AG04450 (cell line): ENCODE measurements at regions of chr3 and their contacts with region 1.

Region 1: GRCh38 chr3:63818281-63819150 is 583 bp upstream of the C3orf49 start:
- DNase-seq: peak; percentile 38
- H3K4me3 ChIP-seq: no peak overlapping the region
- H3K27ac ChIP-seq: no peak overlapping the region
- H3K27me3 ChIP-seq: no peaks in the 10 kb centered on the region
- CTCF ChIP-seq: peak; percentile 82

Region 2: DNA sequence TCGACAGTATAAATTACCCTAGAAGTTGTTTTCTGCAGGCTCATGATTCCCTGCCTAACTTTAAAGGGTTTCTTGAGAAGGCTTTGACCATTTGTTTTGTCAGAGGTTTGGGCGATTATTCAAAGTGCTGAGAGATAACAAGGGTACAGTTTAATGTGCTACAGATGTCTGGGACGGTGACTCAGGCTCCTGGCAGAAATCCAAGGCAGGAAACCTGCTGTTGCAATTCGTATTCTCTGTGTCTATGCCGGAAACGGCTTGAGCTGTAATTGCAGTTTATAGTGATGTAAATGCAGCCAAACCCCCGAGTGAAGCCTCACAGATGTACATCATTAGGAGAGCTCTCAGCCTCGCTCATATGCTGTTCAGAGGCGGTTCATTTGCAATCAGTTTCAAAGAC is 474.8 kb before region 1 on chr3:
- CTCF ChIA-PET with region 1: interaction called, 413 read pairs
- POLR2A ChIA-PET with region 1: interaction called, 3 read pairs
- DNase-seq: peak; percentile 69
- H3K4me3 ChIP-seq: no peak overlapping the region
- H3K27ac ChIP-seq: no peak overlapping the region
- H3K27me3 ChIP-seq: no peaks in the 10 kb centered on the region
- CTCF ChIP-seq: no peak

Region 3: DNA sequence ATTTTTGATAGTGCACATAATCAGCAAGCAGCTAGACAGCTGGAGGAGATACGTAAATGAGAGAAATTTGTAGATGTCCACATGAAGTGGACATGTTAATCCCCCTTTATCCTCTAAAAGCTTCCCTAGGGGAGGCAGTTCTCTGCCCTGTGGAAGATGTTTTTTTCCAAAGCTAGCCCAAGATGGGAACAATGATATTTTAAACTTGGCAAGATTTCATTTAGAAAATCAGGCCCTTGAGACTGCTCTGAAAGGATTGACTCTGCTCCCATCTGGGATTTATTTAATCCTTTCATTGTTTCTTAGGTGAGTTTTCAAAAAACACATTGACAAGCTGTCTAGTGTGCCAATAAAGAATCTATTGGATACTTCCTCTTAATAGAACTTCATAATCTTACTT is 448.4 kb before region 1 on chr3:
- CTCF ChIA-PET with region 1: interaction called, 10 read pairs
- POLR2A ChIA-PET with region 1: no interaction called
- DNase-seq: no peak
- H3K4me3 ChIP-seq: no peak overlapping the region
- H3K27ac ChIP-seq: no peak overlapping the region
- H3K27me3 ChIP-seq: no peaks in the 10 kb centered on the region
- CTCF ChIP-seq: no peak

Region 4: DNA sequence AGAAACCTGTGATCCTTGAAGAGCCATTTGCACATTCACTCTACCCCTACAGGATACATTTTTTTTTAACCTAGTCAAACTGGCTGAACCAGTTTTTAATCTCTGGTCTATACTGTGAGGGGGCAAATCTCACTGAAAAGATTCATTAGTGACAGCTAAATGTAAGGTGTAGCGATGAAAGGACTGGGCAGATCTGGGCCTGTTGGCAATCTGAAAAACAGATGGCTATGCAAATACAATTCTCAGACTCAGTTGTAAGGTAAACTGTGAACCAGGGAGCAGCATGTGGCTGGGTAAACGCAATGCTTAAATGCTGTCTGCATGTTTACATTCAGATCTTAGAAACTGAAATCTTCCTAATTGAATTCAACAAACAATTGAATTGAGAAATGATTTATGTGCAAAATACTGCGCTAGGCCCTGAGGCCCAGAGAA is 241.6 kb before region 1 on chr3:
- CTCF ChIA-PET with region 1: no interaction called
- POLR2A ChIA-PET with region 1: no interaction called
- DNase-seq: no peak
- H3K4me3 ChIP-seq: no peak overlapping the region
- H3K27ac ChIP-seq: no peak overlapping the region
- H3K27me3 ChIP-seq: no peaks in the 10 kb centered on the region
- CTCF ChIP-seq: no peak

Region 5: GRCh38 chr3:63661248-63661647 is 157.3 kb before region 1 on chr3:
- CTCF ChIA-PET with region 1: interaction called, 13 read pairs
- POLR2A ChIA-PET with region 1: no interaction called
- DNase-seq: no peak
- H3K4me3 ChIP-seq: no peak overlapping the region
- H3K27ac ChIP-seq: no peak overlapping the region
- H3K27me3 ChIP-seq: no peaks in the 10 kb centered on the region
- CTCF ChIP-seq: peak; percentile 40

Region 6: GRCh38 chr3:63800097-63800496 is 18.4 kb before region 1 on chr3:
- CTCF ChIA-PET with region 1: interaction called, 11 read pairs
- POLR2A ChIA-PET with region 1: no interaction called
- DNase-seq: no peak
- H3K4me3 ChIP-seq: no peak overlapping the region
- H3K27ac ChIP-seq: no peak overlapping the region
- H3K27me3 ChIP-seq: no peaks in the 10 kb centered on the region
- CTCF ChIP-seq: no peak

Region 7: DNA sequence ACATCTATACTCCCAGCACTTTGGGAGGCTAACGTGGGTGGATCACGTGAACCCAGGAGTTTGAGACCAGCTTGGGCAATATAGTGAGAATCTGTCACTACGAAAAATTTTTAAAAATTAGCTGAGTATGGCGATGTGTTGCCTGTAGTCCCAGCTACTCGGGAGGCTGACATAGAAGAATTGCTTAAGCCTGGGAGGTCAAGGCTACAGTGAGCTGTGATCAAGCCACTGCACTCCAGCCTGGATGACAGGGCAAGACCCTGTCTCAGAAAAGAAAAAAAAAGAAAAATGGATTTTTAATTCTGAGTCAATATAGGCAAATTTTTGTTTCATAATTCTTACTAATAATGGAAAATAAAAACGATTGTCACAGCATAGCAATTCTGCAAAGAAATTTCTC is 13.9 kb after region 1 on chr3:
- CTCF ChIA-PET with region 1: interaction called, 23 read pairs
- POLR2A ChIA-PET with region 1: no interaction called
- DNase-seq: no peak
- H3K4me3 ChIP-seq: no peak overlapping the region
- H3K27ac ChIP-seq: no peak overlapping the region
- H3K27me3 ChIP-seq: no peaks in the 10 kb centered on the region
- CTCF ChIP-seq: no peak